ENCODE measurements at regions of chr7 and their contacts with region 1.

Region 1: GRCh38 chr7:29248713-29249382 is 54.3 kb downstream of the CHN2 start:
- DNase-seq: peak; percentile 88
- ATAC-seq: peak; percentile 95
- H3K4me3 ChIP-seq: no peak overlapping the region
- H3K27ac ChIP-seq: peak overlapping the region; percentile 66
- H3K4me1 ChIP-seq: peaks cover 53% of the 10 kb centered on the region
- H3K27me3 ChIP-seq: no peaks in the 10 kb centered on the region
- CTCF ChIP-seq: no peak
- EP300 ChIP-seq: peak in 1 of 2 experiments; percentile 86; a peak in 2 of 4 replicates
- POLR2A ChIP-seq: no peak
- RAD21 ChIP-seq: peak; percentile 44; the same call in 1 of the 2 replicates

Region 2: DNA sequence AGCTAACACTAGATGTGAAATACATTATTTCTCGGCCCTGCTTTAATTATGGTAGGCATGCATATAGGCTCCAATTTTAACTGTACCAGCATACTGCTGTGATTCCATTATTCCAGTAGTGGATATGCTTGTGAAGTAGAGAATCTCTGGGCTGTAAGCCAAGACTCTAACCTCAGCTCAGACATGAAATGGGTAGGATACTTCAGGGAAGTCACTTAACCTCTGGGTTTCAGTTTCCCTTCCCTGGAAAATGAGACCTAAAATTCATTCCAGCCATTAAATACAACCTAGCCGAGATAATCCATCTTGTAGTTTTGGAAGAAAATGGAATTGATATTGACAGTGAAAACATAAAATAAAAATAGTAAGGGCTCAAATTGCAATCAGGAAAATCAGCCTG is 231.1 kb before region 1 on chr7:
- CTCF ChIA-PET with region 1: no interaction called
- POLR2A ChIA-PET with region 1: no interaction called
- in situ Hi-C with region 1: no loop called
- intact Hi-C with region 1: no loop called
- DNase-seq: no peak
- ATAC-seq: no peak
- H3K4me3 ChIP-seq: no peak overlapping the region
- H3K27ac ChIP-seq: no peak overlapping the region
- H3K4me1 ChIP-seq: no peaks in the 10 kb centered on the region
- H3K27me3 ChIP-seq: no peaks in the 10 kb centered on the region
- CTCF ChIP-seq: no peak
- EP300 ChIP-seq: no peak
- POLR2A ChIP-seq: no peak
- RAD21 ChIP-seq: no peak

Region 3: DNA sequence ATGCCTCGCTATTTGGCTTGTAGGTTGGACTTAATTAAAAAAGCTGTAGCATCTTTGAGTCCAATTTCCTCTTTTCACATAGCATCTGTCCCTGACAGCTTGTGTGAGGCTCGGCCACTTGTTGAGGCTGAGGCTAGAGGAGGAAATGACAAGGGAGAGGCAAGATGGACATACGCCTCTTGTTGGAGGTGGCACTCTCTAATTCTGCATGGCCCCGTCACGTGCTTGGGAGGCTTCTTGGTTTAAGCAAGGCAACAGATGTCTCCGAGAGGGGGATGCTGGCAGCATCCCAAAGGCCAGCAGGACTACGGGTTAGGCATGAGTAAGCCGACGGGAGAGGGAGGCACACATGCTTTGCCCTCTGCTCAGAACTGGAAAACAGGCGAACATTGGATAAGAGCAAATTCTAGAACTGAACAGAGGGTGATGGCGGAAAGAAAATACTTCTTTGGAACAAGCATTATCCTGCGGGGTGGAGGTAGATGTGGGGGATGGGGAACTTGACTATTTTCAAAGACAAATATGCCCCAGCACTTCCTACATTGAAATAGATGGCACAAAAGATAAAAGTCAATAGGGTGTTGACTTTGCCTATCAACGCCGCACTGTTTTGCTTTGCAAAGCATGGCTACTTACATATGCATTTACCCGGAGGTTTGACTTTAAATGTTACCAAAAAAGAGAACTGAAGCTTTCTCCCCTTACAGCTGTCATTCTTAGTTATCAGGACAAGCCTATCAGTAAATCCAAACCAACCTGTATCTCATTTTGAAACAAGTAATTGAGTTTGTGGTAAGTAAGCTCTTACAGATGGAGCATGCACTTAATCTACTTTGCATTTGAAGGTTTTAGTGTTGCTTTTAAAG is 40.5 kb after region 1 on chr7:
- CTCF ChIA-PET with region 1: no interaction called
- POLR2A ChIA-PET with region 1: interaction called, 4 read pairs
- in situ Hi-C with region 1: no loop called
- intact Hi-C with region 1: loop called (anchors 5 kb)
- DNase-seq: peak; percentile 63
- ATAC-seq: peak; percentile 23; the same call in 2 of the 3 replicates
- H3K4me3 ChIP-seq: no peak overlapping the region; a peak in 1 of 6 replicates
- H3K27ac ChIP-seq: peak overlapping the region; percentile 84
- H3K4me1 ChIP-seq: peaks cover 86% of the 10 kb centered on the region
- H3K27me3 ChIP-seq: no peaks in the 10 kb centered on the region
- CTCF ChIP-seq: no peak
- EP300 ChIP-seq: peak in 1 of 2 experiments; percentile 67; a peak in 2 of 4 replicates
- POLR2A ChIP-seq: no peak
- RAD21 ChIP-seq: no peak

Region 4: GRCh38 chr7:29309041-29309854 is 60.4 kb after region 1 on chr7:
- CTCF ChIA-PET with region 1: no interaction called
- POLR2A ChIA-PET with region 1: no interaction called
- in situ Hi-C with region 1: no loop called
- intact Hi-C with region 1: no loop called
- DNase-seq: peak; percentile 28
- ATAC-seq: peak; percentile 82
- H3K4me3 ChIP-seq: no peak overlapping the region
- H3K27ac ChIP-seq: no peak overlapping the region
- H3K4me1 ChIP-seq: peaks cover 32% of the 10 kb centered on the region
- H3K27me3 ChIP-seq: no peaks in the 10 kb centered on the region
- CTCF ChIP-seq: peak; percentile 63
- EP300 ChIP-seq: no peak
- POLR2A ChIP-seq: no peak
- RAD21 ChIP-seq: peak; percentile 50; the same call in 1 of the 2 replicates

Region 5: GRCh38 chr7:29337546-29338116 is 88.8 kb after region 1 on chr7:
- CTCF ChIA-PET with region 1: no interaction called
- POLR2A ChIA-PET with region 1: no interaction called
- in situ Hi-C with region 1: no loop called
- intact Hi-C with region 1: loop called (anchors 5 kb)
- DNase-seq: no peak
- ATAC-seq: no peak; the same call in 2 of the 3 replicates
- H3K4me3 ChIP-seq: peak overlapping the region in 2 of 3 experiments; percentile 1 to 9; a peak in 2 of 6 replicates
- H3K27ac ChIP-seq: peak overlapping the region; percentile 56
- H3K4me1 ChIP-seq: peaks cover 85% of the 10 kb centered on the region
- H3K27me3 ChIP-seq: no peaks in the 10 kb centered on the region
- CTCF ChIP-seq: no peak
- EP300 ChIP-seq: no peak
- POLR2A ChIP-seq: no peak
- RAD21 ChIP-seq: no peak